ENCODE measurements at regions of chr9 and their contacts with region 1.

Region 1: GRCh38 chr9:94900222-94901018 is 173.9 kb downstream of the AOPEP start:
- DNase-seq: no peak
- H3K4me3 ChIP-seq: peak overlapping the region in 5 of 59 donors; percentile 1 to 26 (median 9)
- H3K27ac ChIP-seq: peak overlapping the region in 58 of 59 donors; percentile 11 to 99 (median 81)
- H3K27me3 ChIP-seq: no peaks in the 10 kb centered on the region
- CTCF ChIP-seq: no peak

Region 2: GRCh38 chr9:94656200-94656599 is 244.2 kb before region 1 on chr9:
- intact Hi-C with region 1: no loop called
- DNase-seq: peak in 5 of 10 donors; percentile 19 to 69 (median 49)
- H3K4me3 ChIP-seq: peak overlapping the region in 44 of 59 donors; percentile 1 to 54 (median 31)
- H3K27ac ChIP-seq: peak overlapping the region in 10 of 59 donors; percentile 3 to 55 (median 39)
- H3K27me3 ChIP-seq: no peaks in the 10 kb centered on the region
- CTCF ChIP-seq: no peak

Region 3: DNA sequence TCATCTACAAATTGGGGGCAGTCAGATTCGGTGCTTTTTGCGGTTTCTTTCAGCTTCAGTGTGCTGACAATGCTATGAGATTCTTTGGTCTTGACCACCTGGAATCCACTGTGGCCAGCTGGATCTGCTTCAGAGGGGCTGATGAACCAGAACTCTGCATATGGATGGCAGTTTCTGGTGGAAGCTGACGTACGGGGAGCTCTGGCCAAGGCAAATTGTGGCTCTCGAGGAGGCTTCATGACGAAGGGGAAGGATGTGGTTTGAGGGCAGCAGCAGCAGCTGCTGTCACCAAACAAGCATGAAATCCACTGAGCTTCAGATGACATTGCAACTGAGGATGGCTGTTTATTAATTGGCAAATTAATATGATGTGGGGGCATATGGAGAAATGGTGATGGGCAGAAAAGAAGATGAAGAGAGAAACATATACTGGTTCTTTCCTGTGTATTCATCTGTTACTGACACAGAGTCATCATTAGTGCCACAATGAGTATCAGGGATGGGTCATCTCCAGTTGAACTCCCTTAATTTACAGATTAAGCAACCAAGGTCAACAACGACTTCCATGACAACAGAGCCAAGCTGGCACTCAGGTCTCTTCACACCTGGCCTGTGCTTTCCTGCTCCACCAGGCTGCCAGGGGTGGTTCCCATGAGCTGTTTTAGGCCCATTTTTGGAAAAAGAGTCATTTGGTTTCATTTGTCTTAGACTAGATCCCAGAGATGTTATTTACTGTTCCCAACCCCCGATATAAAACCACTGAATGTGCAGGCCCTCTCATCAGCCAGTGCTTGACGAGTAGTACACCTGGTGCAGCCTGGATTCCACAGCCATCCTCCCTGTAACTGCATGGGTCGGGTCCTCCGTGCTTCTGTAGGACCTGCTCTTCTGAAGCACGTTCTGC is 39.2 kb before region 1 on chr9:
- intact Hi-C with region 1: loop called in 1 of 2 experiments (anchors 5 kb)
- DNase-seq: peak in 1 of 10 donors; percentile 52
- H3K4me3 ChIP-seq: no peak overlapping the region
- H3K27ac ChIP-seq: peak overlapping the region in 17 of 59 donors; percentile 6 to 45 (median 34)
- H3K27me3 ChIP-seq: no peaks in the 10 kb centered on the region
- CTCF ChIP-seq: no peak

Region 4: DNA sequence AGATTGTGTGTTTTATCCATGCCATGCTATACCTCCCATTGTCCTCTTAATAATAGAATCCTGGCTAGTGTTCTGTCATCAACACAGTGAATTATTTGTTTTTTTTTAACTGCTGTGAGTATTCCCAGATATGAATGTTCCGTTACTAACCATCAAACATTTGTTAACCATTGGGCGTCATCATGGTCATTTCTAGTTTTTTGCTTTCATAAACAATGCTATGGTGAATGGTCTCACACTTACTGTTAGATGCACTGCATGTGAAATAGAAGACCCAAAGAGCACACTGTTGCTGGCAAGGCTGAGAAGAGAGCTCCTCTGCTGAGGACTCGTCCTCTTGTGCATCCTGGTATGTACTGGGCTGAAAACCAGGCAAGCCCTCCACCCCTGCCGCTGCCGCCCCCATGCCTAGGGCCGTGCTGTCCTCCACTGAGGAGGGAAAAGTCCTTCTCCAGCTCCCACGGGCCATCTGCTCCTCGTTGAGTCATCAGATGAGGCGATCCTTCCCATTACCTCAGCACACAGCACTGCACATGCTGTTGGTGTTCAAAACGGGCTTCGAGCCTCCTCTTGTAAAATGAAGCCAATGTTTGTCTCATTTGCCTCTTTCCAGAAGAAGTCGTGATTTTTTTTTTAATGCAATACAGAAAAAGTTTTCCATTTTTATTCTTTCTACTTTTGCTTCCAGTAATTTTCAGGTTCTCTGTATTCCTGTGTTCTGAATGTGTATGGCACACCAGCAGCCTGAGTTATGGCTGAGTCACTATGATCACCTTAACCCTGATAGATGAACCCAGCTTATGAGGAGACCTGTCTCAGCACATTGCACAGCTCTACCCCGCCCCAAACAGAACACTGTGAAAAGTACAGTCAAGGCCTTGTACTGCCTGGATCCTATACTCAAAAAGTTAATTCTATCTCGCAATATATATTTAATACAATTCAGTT is 45.1 kb after region 1 on chr9:
- intact Hi-C with region 1: loop called in 1 of 2 experiments (anchors 1 kb)
- DNase-seq: peak; percentile 56 to 94 (median 84)
- H3K4me3 ChIP-seq: peak overlapping the region in 14 of 59 donors; percentile 1 to 43 (median 20)
- H3K27ac ChIP-seq: peak overlapping the region; percentile 57 to 96 (median 85)
- H3K27me3 ChIP-seq: no peaks in the 10 kb centered on the region
- CTCF ChIP-seq: peak in 1 of 56 donors; percentile 10

Region 5: DNA sequence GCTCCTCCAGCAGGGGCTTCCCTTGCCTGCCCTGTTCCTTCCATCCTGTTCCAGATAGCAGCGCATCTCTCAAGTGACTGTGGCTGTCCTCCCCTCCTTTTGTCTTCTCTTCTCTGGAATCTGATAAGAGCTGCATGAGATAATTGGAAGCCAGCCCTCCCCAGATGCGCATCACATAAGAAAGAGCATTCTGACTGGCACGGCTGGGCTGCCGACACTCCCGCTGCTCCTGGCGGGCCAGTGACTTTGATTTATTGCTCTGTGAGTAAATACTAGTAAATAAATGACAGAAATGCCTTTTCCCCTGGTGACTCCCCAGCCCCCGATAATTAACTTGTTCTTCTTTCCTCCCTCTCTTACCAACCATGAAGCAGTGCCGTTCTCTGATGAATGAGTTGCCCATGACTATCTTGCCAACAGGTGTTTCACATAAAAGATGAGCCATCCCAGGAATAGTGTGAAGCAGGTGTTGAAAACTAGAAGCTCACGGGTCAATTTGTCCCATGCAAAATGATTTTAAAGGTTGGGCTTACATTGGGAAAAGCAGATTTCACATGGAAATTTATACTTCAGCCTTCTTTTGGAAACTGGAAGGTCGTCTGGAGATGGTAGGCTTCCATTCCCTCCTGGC is 1187.4 kb after region 1 on chr9:
- intact Hi-C with region 1: no loop called
- DNase-seq: no peak
- H3K4me3 ChIP-seq: peak overlapping the region in 1 of 59 donors; percentile 16
- H3K27ac ChIP-seq: no peak overlapping the region
- H3K27me3 ChIP-seq: no peaks in the 10 kb centered on the region
- CTCF ChIP-seq: no peak

Measured in dorsolateral prefrontal cortex (tissue), 120 donors.